Esophagus squamous epithelium (tissue), 5 donors: ENCODE measurements at regions of chr19 and their contacts with region 1.

Region 1: GRCh38 chr19:40716655-40717324 is at the starts of genes COQ8B and ITPKC:
- DNase-seq: peak; percentile 89
- H3K4me3 ChIP-seq: peak within 1 kb of the TSS; percentile 81 to 94 (median 92)
- H3K27ac ChIP-seq: peak within 1 kb of the TSS; percentile 98 to 100 (median 100)
- H3K4me1 ChIP-seq: peaks cover 24 to 74% (median 43%) of the 10 kb centered on the region in 3 donors
- H3K27me3 ChIP-seq: no peaks in the 10 kb centered on the region
- CTCF ChIP-seq: peak in 4 of 6 experiments; percentile 18 to 45 (median 42)
- POLR2A ChIP-seq: peak in 3 of 4 donors; percentile 86 to 91 (median 89)
- total RNA-seq, gene COQ8B: 19.3 to 64.1 (median 33.3) TPM
- total RNA-seq, gene ITPKC: 58.5 to 127 (median 95.7) TPM

Region 2: DNA sequence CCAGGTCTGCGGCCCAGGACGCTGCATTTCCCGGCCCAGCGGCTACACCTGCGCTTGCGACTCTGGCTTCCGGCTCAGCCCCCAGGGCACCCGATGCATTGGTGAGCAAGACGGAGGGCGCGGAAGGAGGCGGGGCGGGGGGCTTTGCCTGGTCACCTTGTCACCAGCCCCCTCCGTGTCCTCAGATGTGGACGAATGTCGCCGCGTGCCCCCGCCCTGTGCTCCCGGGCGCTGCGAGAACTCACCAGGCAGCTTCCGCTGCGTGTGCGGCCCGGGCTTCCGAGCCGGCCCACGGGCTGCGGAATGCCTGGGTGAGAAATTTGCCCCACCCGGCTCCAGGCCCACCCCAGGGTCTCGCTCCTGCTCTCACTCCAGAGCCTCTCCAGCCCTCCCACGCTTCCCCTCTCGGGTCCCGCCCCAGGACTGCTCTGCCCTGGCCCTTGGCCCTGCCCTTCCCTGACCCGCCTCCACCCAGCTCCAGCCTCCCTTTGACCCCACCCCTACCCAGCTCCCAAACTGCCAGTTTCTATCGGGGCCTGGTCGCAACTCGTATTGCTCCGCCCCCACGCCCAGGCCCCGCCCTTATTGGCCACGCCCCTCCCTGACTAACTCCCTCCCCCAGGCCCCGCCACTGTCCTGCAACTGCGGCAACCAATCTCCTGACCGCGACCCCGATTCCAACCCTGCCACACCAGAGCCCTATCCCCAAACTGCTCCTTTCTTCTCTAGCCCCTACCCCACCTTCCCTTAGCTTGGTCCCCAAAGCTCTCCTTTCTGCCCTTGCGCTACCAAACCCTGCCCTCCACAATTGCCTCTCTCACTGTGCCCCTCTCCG is 107.0 kb before region 1 on chr19:
- intact Hi-C with region 1: loop called (anchors 5 kb)
- DNase-seq: peak; percentile 76
- H3K4me3 ChIP-seq: peak overlapping the region; percentile 43 to 74 (median 58)
- H3K27ac ChIP-seq: peak overlapping the region; percentile 94 to 97 (median 95)
- H3K4me1 ChIP-seq: peaks cover 55 to 98% (median 56%) of the 10 kb centered on the region in 3 donors
- H3K27me3 ChIP-seq: no peaks in the 10 kb centered on the region
- CTCF ChIP-seq: peak in 1 of 6 experiments; percentile 4
- POLR2A ChIP-seq: peak in 3 of 4 donors; percentile 60 to 79 (median 74)

Region 3: GRCh38 chr19:40762754-40763470 is 46.1 kb after region 1 on chr19:
- intact Hi-C with region 1: no loop called
- DNase-seq: no peak
- H3K4me3 ChIP-seq: no peak overlapping the region
- H3K27ac ChIP-seq: no peak overlapping the region
- H3K4me1 ChIP-seq: peaks cover 0 to 16% (median 0%) of the 10 kb centered on the region in 3 donors
- H3K27me3 ChIP-seq: no peaks in the 10 kb centered on the region
- CTCF ChIP-seq: no peak
- POLR2A ChIP-seq: no peak